Left ventricle myocardium superior (tissue), 1 donor: ENCODE measurements at regions of chr6 and their contacts with region 1.

Region 1: GRCh38 chr6:21593412-21593926 is at the start of gene SOX4:
- DNase-seq: peak; percentile 93
- ATAC-seq: peak; percentile 84
- total RNA-seq, gene SOX4: 10.0 TPM

Region 2: GRCh38 chr6:20877008-20877937 is 716.2 kb before region 1 on chr6:
- intact Hi-C with region 1: loop called (anchors 10 kb)
- DNase-seq: peak; percentile 18
- ATAC-seq: peak; percentile 73

Region 3: DNA sequence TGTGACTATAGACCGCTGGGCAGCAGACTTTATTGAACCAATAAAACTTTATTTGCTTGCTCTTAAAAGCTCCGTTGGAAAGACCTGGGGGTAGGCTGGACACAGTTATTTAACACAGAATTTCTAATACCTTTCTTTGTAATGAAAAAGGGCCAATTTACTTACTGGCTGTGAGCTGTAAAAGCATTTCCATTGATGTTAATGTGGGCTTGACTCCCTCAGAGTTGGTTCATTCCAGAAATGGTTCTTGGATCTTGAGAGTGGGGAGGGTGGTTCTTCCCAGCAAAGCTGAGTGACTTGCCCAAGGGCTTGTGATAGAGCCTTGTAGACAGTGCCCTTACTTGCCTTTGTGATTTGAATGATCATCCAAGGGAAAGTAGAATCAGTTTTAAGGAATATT is 100.7 kb after region 1 on chr6:
- intact Hi-C with region 1: no loop called
- DNase-seq: no peak
- ATAC-seq: no peak

Region 4: DNA sequence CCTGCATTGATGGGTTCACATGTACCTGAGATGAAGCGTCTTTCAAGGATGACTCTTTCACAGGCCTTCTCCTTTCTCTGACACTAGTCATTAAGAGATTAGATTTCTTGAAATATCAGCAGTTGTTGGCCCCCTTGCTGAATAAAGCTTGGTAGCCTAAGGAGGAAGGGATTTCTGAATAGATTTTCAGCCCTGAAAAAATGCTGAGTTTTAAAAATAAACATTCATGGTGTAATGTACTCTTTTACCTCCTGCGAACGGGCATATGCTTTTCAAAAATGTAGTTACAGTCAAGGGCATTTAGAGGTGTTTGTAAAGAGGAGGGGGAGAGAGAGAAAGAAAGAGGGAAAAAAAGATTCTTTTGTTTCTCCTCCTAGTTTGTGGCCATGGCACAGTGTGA is 222.8 kb after region 1 on chr6:
- intact Hi-C with region 1: no loop called
- DNase-seq: no peak
- ATAC-seq: no peak

Region 5: DNA sequence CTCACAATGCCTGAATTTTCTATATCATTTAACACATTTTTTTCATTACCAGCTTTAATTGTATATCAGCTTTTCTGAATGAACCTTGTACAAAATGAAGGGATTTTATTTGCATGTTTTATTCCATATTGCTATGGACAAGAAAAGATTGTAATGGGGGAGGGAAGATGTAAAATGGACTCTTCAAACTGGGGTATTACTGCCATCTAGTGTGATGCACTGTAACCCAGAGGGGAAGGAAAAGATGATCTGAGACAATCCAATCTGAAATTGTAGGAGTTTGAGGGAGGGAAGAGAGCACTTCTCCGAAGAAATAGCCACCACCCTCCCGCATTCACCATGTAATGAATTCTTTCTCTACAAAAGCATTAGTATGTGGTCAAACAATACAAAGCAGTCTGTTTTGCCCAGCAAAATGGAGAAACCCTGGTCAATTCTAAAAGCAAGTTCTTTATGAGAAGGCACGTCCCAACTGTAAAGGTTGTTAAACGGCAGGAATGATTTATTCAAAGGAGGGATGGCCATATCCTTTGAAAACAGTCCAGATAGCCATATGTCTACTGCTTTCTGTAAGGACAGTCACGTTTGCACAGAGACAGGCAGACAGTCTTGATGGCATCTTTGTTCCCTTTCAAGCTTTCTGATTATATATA is 1853.1 kb after region 1 on chr6:
- intact Hi-C with region 1: loop called (anchors 10 kb)
- DNase-seq: no peak
- ATAC-seq: peak; percentile 87